ENCODE measurements at regions of chr19 and their contacts with region 1.

Region 1: GRCh38 chr19:45523642-45524256 is 16.5 kb downstream of the VASP start:
- DNase-seq: peak; percentile 55 to 92 (median 79)

Region 2: GRCh38 chr19:45469132-45469944 is 54.4 kb before region 1 on chr19:
- intact Hi-C with region 1: no loop called
- DNase-seq: peak; percentile 86 to 97 (median 92)

Region 3: DNA sequence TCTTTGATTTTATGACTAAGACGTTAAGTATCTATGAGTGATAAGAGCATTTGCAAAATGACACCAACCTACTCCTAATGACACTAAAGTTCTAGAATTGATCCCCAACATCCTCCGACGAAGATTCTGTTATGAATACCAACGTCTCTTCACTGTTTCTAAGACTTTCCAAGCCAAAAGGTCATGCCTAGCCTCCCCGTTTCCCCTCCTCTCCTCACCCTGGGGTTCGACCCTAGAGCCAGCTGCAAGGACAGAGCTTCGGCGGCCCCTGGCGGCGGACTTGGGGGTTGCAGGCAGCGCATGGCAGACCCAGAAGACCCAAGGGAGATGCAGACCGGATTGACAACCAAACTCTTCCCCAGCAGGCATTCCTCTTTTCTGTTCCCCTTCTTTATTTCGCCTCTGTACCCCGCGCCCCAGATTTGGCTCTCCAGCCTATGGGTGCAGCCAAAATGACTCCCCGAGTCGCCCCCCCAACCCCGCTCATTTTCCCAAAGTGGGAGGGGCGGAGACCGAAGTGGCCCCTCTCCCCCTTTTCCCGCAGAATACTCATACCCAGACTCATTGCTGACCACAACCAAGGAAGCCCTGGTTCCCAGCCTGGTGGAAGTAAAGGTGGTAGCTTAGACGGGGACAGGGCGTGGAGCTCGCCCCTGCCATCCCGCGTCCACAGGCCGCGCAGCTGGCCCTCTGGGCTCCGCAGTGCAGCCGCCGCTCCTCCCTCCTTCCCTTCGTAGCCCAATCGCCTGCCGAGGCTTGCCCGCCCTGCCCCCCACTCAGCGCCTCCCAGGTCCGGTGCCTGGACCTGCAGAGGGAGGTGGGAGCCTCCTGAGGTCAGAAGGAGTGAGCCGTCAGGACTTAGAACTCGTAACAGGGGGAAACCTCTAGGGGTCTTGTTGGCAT is 119.5 kb after region 1 on chr19:
- intact Hi-C with region 1: loop called (anchors 10 kb)
- DNase-seq: peak; percentile 81 to 97 (median 93)